ENCODE measurements at regions of chr3 and their contacts with region 1.

Region 1: DNA sequence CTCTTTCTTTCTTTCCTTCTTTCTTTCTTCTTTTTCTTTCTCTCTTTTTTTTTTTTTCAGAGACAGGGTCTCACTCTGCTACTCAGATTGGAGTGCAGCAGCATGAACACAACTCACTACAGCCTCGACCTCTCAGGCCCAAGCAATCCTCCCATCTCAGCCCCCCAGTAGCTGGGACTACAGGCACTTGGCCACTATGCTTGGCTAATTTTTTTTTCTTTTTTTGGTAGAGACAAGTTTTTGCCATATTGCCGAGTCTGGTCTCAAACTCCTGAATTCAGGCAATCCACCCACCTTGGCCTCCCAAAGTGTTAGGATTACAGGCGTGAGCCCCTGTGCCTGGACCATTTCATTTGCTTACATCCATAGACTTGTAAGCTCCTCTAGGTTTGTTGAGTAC is 166.2 kb upstream of the SYNPR start:
- DNase-seq: no peak
- ATAC-seq: no peak
- H3K4me3 ChIP-seq: no peak overlapping the region
- H3K27ac ChIP-seq: no peak overlapping the region
- H3K4me1 ChIP-seq: no peaks in the 10 kb centered on the region
- H3K27me3 ChIP-seq: peaks cover 0 to 4% (median 0%) of the 10 kb centered on the region in 3 donors
- CTCF ChIP-seq: no peak

Region 2: GRCh38 chr3:63076357-63076756 is 35.6 kb before region 1 on chr3:
- intact Hi-C with region 1: loop called in 1 of 2 experiments (anchors 1 kb)
- DNase-seq: no peak
- ATAC-seq: no peak
- H3K4me3 ChIP-seq: no peak overlapping the region
- H3K27ac ChIP-seq: no peak overlapping the region
- H3K4me1 ChIP-seq: no peaks in the 10 kb centered on the region
- H3K27me3 ChIP-seq: no peaks in the 10 kb centered on the region
- CTCF ChIP-seq: no peak

Region 3: GRCh38 chr3:63193629-63194028 is 81.7 kb after region 1 on chr3:
- intact Hi-C with region 1: no loop called
- DNase-seq: no peak
- ATAC-seq: no peak
- H3K4me3 ChIP-seq: no peak overlapping the region
- H3K27ac ChIP-seq: no peak overlapping the region
- H3K4me1 ChIP-seq: no peaks in the 10 kb centered on the region
- H3K27me3 ChIP-seq: no peaks in the 10 kb centered on the region
- CTCF ChIP-seq: peak; percentile 7